Endothelial cell of umbilical vein (primary cell): ENCODE measurements at regions of chr5 and their contacts with region 1.

Region 1: GRCh38 chr5:59562756-59563389 is 330.7 kb downstream of the PDE4D start:
- DNase-seq: peak; percentile 88
- H3K4me3 ChIP-seq: peak overlapping the region in 1 of 3 experiments; percentile 35
- H3K27ac ChIP-seq: peak overlapping the region; percentile 77
- H3K4me1 ChIP-seq: peaks cover 49% of the 10 kb centered on the region
- H3K27me3 ChIP-seq: no peaks in the 10 kb centered on the region
- CTCF ChIP-seq: no peak
- POLR2A ChIP-seq: no peak

Region 2: GRCh38 chr5:59517926-59518585 is 44.8 kb before region 1 on chr5:
- CTCF ChIA-PET with region 1: no interaction called
- POLR2A ChIA-PET with region 1: no interaction called
- dilution Hi-C with region 1: no loop called
- intact Hi-C with region 1: loop called (anchors 2 kb)
- DNase-seq: peak; percentile 75
- H3K4me3 ChIP-seq: peak overlapping the region in 1 of 3 experiments; percentile 39
- H3K27ac ChIP-seq: peak overlapping the region; percentile 78
- H3K4me1 ChIP-seq: peaks cover 29% of the 10 kb centered on the region
- H3K27me3 ChIP-seq: no peaks in the 10 kb centered on the region
- CTCF ChIP-seq: no peak
- POLR2A ChIP-seq: no peak

Region 3: DNA sequence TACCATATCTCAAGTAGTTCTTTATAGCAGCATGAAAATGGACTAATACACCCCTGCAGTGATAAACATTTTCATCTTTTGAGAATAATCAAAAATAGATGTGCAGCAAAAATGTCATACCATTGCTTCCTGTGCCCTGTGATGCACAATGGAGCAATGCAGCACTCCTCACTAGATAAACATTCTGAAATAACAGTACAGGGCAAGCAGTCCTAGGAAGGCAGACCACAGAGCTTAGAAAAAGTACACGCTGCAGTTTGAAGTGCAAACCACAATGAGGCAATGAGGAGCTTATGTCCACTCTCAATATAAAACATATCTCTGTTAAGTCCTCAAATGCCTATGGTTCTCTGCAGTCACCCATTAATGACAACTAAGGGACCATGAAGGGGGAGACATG is 36.9 kb before region 1 on chr5:
- CTCF ChIA-PET with region 1: no interaction called
- POLR2A ChIA-PET with region 1: no interaction called
- dilution Hi-C with region 1: no loop called
- intact Hi-C with region 1: loop called (anchors 1 kb)
- DNase-seq: peak; percentile 63
- H3K4me3 ChIP-seq: no peak overlapping the region
- H3K27ac ChIP-seq: peak overlapping the region; percentile 88
- H3K4me1 ChIP-seq: peaks cover 33% of the 10 kb centered on the region
- H3K27me3 ChIP-seq: no peaks in the 10 kb centered on the region
- CTCF ChIP-seq: peak in 1 of 2 donors; percentile 7
- POLR2A ChIP-seq: no peak

Region 4: DNA sequence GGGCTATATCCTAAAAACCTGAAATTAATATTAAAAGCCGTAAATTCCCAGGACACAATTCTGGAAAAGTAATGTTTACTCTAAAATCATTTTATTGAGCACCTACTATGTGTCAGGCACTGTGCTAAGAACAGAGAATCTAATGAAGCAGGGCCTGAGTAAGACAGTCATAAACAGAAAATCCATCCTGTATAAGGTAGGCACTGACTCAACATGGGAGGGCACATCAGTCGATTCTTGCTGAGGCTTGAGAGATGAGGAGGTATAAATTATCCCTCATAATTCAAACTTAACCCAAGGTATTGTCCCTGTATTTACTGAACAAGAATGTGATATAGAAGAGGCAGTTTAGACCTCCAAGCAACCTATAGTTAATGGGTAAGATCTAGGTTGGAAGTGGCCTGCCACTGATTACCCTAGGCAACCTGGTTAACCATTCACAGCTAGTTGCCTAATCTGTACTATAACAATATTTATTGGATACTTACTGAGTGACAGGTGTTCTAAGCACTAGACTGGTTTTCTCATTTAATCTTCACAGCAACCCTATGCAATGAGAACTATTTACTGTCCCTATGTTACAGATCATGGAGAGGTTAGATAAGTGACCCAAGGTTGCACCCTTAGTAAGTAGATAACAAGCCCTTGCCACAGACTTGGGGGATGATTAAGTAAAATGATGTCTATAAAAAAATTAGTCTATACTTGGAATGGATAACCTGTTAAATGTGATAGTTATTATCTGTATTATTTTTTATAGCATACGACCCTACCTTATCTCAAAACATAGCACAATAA is 13.0 kb after region 1 on chr5:
- CTCF ChIA-PET with region 1: no interaction called
- POLR2A ChIA-PET with region 1: no interaction called
- dilution Hi-C with region 1: no loop called
- intact Hi-C with region 1: no loop called
- DNase-seq: no peak
- H3K4me3 ChIP-seq: no peak overlapping the region
- H3K27ac ChIP-seq: no peak overlapping the region
- H3K4me1 ChIP-seq: no peaks in the 10 kb centered on the region
- H3K27me3 ChIP-seq: no peaks in the 10 kb centered on the region
- CTCF ChIP-seq: no peak
- POLR2A ChIP-seq: no peak

Region 5: DNA sequence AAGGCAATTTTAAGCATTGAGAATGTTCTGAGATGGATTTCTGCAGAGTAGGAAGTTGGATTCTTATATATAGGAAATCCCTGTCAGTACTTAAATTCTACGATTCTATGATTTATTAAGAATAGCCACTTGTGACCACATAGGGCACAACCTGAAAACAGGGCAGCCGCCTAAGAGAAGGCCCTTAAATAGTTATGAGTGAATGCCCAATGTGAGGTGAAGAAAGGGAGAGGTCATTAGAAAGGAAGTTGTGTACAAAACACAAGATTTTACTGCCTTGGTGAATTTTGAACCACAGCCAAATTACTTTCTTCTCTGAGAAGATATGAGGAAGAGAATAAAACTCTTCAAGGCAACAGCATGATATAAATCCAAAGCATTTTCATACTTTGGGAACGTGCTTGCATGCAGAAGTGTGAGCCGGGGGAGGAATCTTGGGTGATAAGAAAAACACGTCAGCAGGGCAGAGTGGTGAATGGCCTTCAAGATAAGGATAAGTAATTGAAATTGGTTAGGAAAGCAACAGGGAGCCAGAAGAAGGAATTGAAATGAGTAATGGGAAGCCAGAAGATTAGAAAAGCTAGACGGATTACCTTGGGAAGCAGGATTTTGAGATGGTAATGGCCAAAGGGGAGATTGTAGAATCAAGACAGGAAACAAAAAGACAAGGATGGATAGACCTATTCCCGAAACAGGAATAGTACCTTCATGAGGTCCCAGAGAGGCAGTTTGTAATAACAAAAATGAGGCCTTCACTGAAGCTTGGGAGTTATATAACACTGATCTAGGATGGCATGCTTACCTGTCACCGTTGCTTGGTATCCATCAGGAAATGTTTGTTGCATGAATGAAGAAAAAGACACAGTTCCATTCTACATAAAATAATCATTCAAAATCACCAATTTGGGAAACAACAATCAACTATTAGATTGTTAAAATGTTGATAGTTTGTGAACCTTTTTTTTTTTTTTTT is 86.4 kb after region 1 on chr5:
- CTCF ChIA-PET with region 1: interaction called, 3 read pairs
- POLR2A ChIA-PET with region 1: no interaction called
- dilution Hi-C with region 1: no loop called
- intact Hi-C with region 1: loop called (anchors 1 kb)
- DNase-seq: peak; percentile 91
- H3K4me3 ChIP-seq: peak overlapping the region in 1 of 3 experiments; percentile 14
- H3K27ac ChIP-seq: peak overlapping the region; percentile 79
- H3K4me1 ChIP-seq: peaks cover 24% of the 10 kb centered on the region
- H3K27me3 ChIP-seq: no peaks in the 10 kb centered on the region
- CTCF ChIP-seq: no peak
- POLR2A ChIP-seq: no peak

Region 6: DNA sequence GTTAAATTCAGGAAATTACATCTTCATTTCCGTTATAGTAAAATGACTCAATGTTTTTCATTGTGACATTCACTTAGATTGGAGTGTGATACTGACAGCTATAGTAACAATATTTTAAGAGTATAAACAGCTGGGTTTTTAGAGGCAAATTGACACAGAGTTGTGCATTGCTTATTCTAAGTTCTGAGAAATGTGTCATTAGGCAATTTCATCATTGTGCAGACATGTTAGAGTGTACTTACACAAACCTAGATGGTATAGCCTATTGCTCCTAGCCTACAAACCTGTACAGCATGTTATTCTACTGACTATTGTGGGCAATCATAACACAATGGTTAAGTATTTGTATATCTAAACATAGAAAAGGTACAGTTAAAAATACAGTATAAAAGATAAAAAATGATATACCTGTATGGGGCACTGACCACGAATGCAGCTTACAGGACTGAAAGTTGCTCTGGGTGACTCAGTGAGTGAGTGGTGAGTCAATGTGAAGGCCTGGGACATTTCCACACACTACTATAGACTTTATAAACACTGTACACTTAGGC is 198.0 kb after region 1 on chr5:
- CTCF ChIA-PET with region 1: no interaction called
- POLR2A ChIA-PET with region 1: no interaction called
- dilution Hi-C with region 1: no loop called
- intact Hi-C with region 1: loop called (anchors 2 kb)
- DNase-seq: peak; percentile 88
- H3K4me3 ChIP-seq: peak overlapping the region in 1 of 3 experiments; percentile 48
- H3K27ac ChIP-seq: peak overlapping the region; percentile 98
- H3K4me1 ChIP-seq: peaks cover 62% of the 10 kb centered on the region
- H3K27me3 ChIP-seq: no peaks in the 10 kb centered on the region
- CTCF ChIP-seq: no peak
- POLR2A ChIP-seq: no peak

Region 7: GRCh38 chr5:59790399-59791125 is 227.7 kb after region 1 on chr5:
- CTCF ChIA-PET with region 1: no interaction called
- POLR2A ChIA-PET with region 1: no interaction called
- dilution Hi-C with region 1: no loop called
- intact Hi-C with region 1: loop called (anchors 2 kb)
- DNase-seq: peak; percentile 92
- H3K4me3 ChIP-seq: peak overlapping the region in 2 of 3 experiments; percentile 6 to 44
- H3K27ac ChIP-seq: peak overlapping the region; percentile 94
- H3K4me1 ChIP-seq: peaks cover 34% of the 10 kb centered on the region
- H3K27me3 ChIP-seq: no peaks in the 10 kb centered on the region
- CTCF ChIP-seq: no peak
- POLR2A ChIP-seq: peak; percentile 76